ENCODE measurements at regions of chr21 and their contacts with region 1.

Region 1: DNA sequence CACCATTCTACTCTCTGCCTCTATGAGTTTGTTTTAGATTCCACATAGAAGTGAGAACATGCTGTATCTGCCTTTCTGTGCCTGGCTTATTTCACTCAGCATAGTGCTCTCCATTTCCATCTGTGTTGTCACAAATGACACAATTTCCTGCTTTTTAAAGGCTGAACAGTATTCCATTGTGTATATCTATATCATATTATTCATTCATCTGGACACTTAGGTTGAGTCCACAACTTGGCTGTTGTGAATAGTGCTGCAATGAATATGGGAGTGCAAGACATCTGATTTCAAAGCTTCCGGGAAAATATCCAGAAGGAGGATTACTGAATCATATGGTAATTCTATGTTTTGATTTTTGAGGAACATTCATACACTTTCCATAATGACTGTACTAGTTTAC is 20.1 kb upstream of the DONSON start:
- DNase-seq: no peak
- ATAC-seq: no peak
- H3K4me3 Mint-ChIP-seq: no peak overlapping the region
- H3K27ac Mint-ChIP-seq: no peak overlapping the region
- H3K4me1 Mint-ChIP-seq: no peaks in the 10 kb centered on the region
- H3K27me3 Mint-ChIP-seq: no peaks in the 10 kb centered on the region
- CTCF ChIP-seq: no peak

Region 2: GRCh38 chr21:32834916-32835235 is 773.7 kb before region 1 on chr21:
- CTCF ChIA-PET with region 1: interaction called, 4 read pairs
- POLR2A ChIA-PET with region 1: no interaction called
- intact Hi-C with region 1: loop called (anchors 2 kb)
- DNase-seq: no peak
- ATAC-seq: no peak
- H3K4me3 Mint-ChIP-seq: no peak overlapping the region
- H3K27ac Mint-ChIP-seq: no peak overlapping the region
- H3K4me1 Mint-ChIP-seq: no peaks in the 10 kb centered on the region
- H3K27me3 Mint-ChIP-seq: peaks cover 9% of the 10 kb centered on the region
- CTCF ChIP-seq: no peak

Region 3: GRCh38 chr21:32921632-32922230 is 686.8 kb before region 1 on chr21:
- CTCF ChIA-PET with region 1: interaction called, 6 read pairs
- POLR2A ChIA-PET with region 1: no interaction called
- intact Hi-C with region 1: loop called (anchors 5 kb)
- DNase-seq: peak; percentile 26
- ATAC-seq: peak; percentile 40
- H3K4me3 Mint-ChIP-seq: no peak overlapping the region
- H3K27ac Mint-ChIP-seq: no peak overlapping the region
- H3K4me1 Mint-ChIP-seq: no peaks in the 10 kb centered on the region
- H3K27me3 Mint-ChIP-seq: peaks cover 20% of the 10 kb centered on the region
- CTCF ChIP-seq: peak; percentile 44

Region 4: GRCh38 chr21:32940079-32941014 is 668.2 kb before region 1 on chr21:
- CTCF ChIA-PET with region 1: interaction called, 13 read pairs
- POLR2A ChIA-PET with region 1: no interaction called
- intact Hi-C with region 1: loop called (anchors 1 kb)
- DNase-seq: no peak
- ATAC-seq: no peak
- H3K4me3 Mint-ChIP-seq: no peak overlapping the region
- H3K27ac Mint-ChIP-seq: no peak overlapping the region
- H3K4me1 Mint-ChIP-seq: no peaks in the 10 kb centered on the region
- H3K27me3 Mint-ChIP-seq: peaks cover 9% of the 10 kb centered on the region
- CTCF ChIP-seq: no peak

Region 5: DNA sequence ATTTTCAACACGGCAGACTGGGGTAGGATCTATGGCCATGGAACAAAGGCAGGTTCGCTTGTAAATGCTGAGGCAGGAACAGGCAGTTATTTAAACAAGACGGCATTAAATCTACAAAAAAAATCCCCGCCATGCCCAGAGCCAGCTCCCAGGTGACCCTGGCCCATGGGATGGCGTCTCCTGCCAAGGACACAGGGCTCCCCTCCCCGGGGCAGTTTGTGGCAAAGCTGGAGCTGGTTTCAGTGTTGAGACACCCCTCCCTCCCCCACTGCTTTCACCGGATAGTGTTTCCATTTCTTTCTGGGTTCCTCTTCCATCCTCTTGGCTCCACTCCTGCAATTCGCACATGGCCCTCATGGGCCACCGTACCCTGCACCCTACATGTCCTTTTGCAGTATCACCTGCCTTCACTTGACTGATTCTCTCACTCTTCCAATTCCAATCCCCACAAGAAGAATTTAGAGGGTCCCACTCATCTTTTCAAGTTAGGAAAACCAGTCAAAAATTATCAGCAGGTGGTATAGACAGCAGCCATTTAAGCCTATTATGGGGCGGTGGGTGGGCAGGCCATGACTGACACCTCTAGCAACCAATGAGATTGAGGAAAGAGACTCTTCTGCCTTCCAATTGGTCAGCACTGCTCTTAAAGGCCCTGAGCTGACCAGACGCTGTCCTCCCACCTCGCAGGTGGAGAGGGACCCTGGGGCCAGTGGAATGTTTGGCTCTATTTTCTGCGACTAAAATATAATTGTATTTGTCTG is 486.7 kb before region 1 on chr21:
- CTCF ChIA-PET with region 1: no interaction called
- POLR2A ChIA-PET with region 1: no interaction called
- intact Hi-C with region 1: no loop called
- DNase-seq: no peak
- ATAC-seq: no peak
- H3K4me3 Mint-ChIP-seq: no peak overlapping the region
- H3K27ac Mint-ChIP-seq: no peak overlapping the region
- H3K4me1 Mint-ChIP-seq: no peaks in the 10 kb centered on the region
- H3K27me3 Mint-ChIP-seq: peaks cover 28% of the 10 kb centered on the region
- CTCF ChIP-seq: no peak

Region 6: GRCh38 chr21:33531007-33531406 is 77.6 kb before region 1 on chr21:
- CTCF ChIA-PET with region 1: no interaction called
- POLR2A ChIA-PET with region 1: no interaction called
- intact Hi-C with region 1: no loop called
- DNase-seq: no peak
- ATAC-seq: no peak
- H3K4me3 Mint-ChIP-seq: no peak overlapping the region
- H3K27ac Mint-ChIP-seq: no peak overlapping the region
- H3K4me1 Mint-ChIP-seq: no peaks in the 10 kb centered on the region
- H3K27me3 Mint-ChIP-seq: no peaks in the 10 kb centered on the region
- CTCF ChIP-seq: no peak

Region 7: GRCh38 chr21:33588485-33589335 is 19.8 kb before region 1 on chr21 and contains the start of gene DONSON:
- CTCF ChIA-PET with region 1: interaction called, 11 read pairs
- POLR2A ChIA-PET with region 1: interaction called, 5 read pairs
- intact Hi-C with region 1: loop called (anchors 2 kb)
- DNase-seq: peak; percentile 94
- ATAC-seq: peak; percentile 95
- H3K4me3 Mint-ChIP-seq: peak within 1 kb of the TSS; percentile 90
- H3K27ac Mint-ChIP-seq: peak within 1 kb of the TSS; percentile 56
- H3K4me1 Mint-ChIP-seq: peaks cover 10% of the 10 kb centered on the region
- H3K27me3 Mint-ChIP-seq: no peaks in the 10 kb centered on the region
- CTCF ChIP-seq: no peak
- total RNA-seq, gene DONSON: 4.4 and 4.7 TPM in 2 replicates

Region 8: DNA sequence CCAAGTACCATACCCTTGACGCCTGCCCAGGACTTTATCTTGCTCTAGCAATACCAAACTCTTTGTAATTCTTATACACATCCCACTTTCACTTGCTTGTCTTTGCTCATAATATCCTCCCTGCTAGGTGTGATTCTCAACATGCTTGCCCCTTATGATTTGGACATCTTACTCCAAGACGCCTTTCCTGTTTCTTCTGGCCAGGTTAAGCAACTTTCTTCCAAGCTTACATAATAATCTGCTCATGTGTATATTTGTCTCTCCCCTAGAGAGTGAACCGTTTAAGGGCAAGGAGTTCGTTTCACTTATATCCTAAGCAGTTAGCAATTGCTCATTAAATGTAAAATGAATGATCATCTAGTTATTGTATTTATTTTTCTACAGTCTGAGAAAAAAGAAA is 11.2 kb after region 1 on chr21:
- CTCF ChIA-PET with region 1: interaction called, 10 read pairs
- POLR2A ChIA-PET with region 1: no interaction called
- intact Hi-C with region 1: no loop called
- DNase-seq: no peak
- ATAC-seq: no peak
- H3K4me3 Mint-ChIP-seq: no peak overlapping the region
- H3K27ac Mint-ChIP-seq: no peak overlapping the region
- H3K4me1 Mint-ChIP-seq: peaks cover 1% of the 10 kb centered on the region
- H3K27me3 Mint-ChIP-seq: no peaks in the 10 kb centered on the region
- CTCF ChIP-seq: no peak

Region 9: DNA sequence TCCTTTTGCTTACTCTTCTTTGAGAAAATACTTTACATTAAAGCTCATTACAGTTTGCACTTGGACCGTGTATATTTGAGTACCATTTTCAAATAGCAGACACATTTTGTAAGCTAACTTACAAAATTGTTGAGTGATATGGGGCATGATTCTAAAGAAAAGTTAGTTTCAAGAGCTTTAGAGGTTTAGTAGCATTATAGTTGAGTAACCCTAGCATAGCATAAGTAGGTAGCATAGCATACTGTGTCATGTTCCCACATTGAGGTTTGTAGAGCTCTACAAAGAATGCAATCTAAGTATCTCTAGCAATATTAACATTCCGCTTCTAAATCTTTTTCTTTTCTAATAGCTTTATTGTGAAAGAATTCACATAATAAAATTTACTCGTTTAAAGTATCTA is 125.7 kb after region 1 on chr21:
- CTCF ChIA-PET with region 1: no interaction called
- POLR2A ChIA-PET with region 1: no interaction called
- intact Hi-C with region 1: no loop called
- DNase-seq: no peak
- ATAC-seq: no peak
- H3K4me3 Mint-ChIP-seq: no peak overlapping the region
- H3K27ac Mint-ChIP-seq: no peak overlapping the region
- H3K4me1 Mint-ChIP-seq: no peaks in the 10 kb centered on the region
- H3K27me3 Mint-ChIP-seq: no peaks in the 10 kb centered on the region
- CTCF ChIP-seq: no peak

Measured in activated B cell treated with CpG ODN at 0.5 μM for 24 hours (primary cell).